CD8-positive, alpha-beta T cell (primary cell): ENCODE measurements at regions of chr3 and their contacts with region 1.

Region 1: GRCh38 chr3:105845488-105845887 is 23.3 kb downstream of the CBLB start:
- DNase-seq: no peak
- ATAC-seq: no peak
- H3K4me3 ChIP-seq: no peak overlapping the region
- H3K4me3 Mint-ChIP-seq: no peak overlapping the region
- H3K27ac ChIP-seq: peak overlapping the region in 1 of 2 experiments; percentile 21
- H3K27ac Mint-ChIP-seq: peak overlapping the region; percentile 62
- H3K4me1 ChIP-seq: peaks cover 47% of the 10 kb centered on the region
- H3K4me1 Mint-ChIP-seq: peaks cover 56% of the 10 kb centered on the region
- H3K27me3 ChIP-seq: no peaks in the 10 kb centered on the region
- H3K27me3 Mint-ChIP-seq: no peaks in the 10 kb centered on the region
- CTCF ChIP-seq: no peak

Region 2: GRCh38 chr3:105473521-105474223 is 371.8 kb before region 1 on chr3:
- CTCF ChIA-PET with region 1: no interaction called
- POLR2A ChIA-PET with region 1: no interaction called
- intact Hi-C with region 1: no loop called
- DNase-seq: no peak
- ATAC-seq: no peak
- H3K4me3 ChIP-seq: no peak overlapping the region
- H3K4me3 Mint-ChIP-seq: no peak overlapping the region
- H3K27ac ChIP-seq: no peak overlapping the region
- H3K27ac Mint-ChIP-seq: no peak overlapping the region
- H3K4me1 ChIP-seq: no peaks in the 10 kb centered on the region
- H3K4me1 Mint-ChIP-seq: no peaks in the 10 kb centered on the region
- H3K27me3 ChIP-seq: no peaks in the 10 kb centered on the region
- H3K27me3 Mint-ChIP-seq: no peaks in the 10 kb centered on the region
- CTCF ChIP-seq: no peak

Region 3: DNA sequence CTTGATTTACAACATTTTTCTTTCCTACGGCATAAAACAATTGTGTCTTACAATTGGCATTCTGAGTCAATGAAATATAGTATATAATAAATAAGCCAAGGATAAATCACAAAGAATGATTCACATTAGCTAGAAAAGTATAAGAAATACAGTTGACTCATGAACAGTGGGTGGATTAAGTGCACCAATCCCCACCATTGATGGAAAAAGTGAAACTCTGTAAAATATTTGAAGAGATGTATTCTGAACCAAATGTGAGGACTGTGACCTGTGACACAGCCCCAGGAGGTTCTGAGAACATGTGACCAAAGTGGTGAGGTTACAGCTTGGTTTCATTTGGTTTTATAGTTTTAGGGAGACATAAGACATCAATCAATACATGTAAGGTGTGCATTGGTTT is 251.3 kb before region 1 on chr3:
- CTCF ChIA-PET with region 1: no interaction called
- POLR2A ChIA-PET with region 1: no interaction called
- intact Hi-C with region 1: no loop called
- DNase-seq: no peak
- ATAC-seq: no peak
- H3K4me3 ChIP-seq: no peak overlapping the region
- H3K4me3 Mint-ChIP-seq: no peak overlapping the region
- H3K27ac ChIP-seq: no peak overlapping the region
- H3K27ac Mint-ChIP-seq: no peak overlapping the region
- H3K4me1 ChIP-seq: no peaks in the 10 kb centered on the region
- H3K4me1 Mint-ChIP-seq: no peaks in the 10 kb centered on the region
- H3K27me3 ChIP-seq: no peaks in the 10 kb centered on the region
- H3K27me3 Mint-ChIP-seq: no peaks in the 10 kb centered on the region
- CTCF ChIP-seq: no peak

Region 4: GRCh38 chr3:105656651-105657504 is 188.6 kb before region 1 on chr3:
- CTCF ChIA-PET with region 1: no interaction called
- POLR2A ChIA-PET with region 1: no interaction called
- intact Hi-C with region 1: no loop called
- DNase-seq: no peak
- ATAC-seq: no peak
- H3K4me3 ChIP-seq: no peak overlapping the region
- H3K4me3 Mint-ChIP-seq: no peak overlapping the region
- H3K27ac ChIP-seq: no peak overlapping the region
- H3K27ac Mint-ChIP-seq: peak overlapping the region; percentile 29
- H3K4me1 ChIP-seq: no peaks in the 10 kb centered on the region
- H3K4me1 Mint-ChIP-seq: peaks cover 4% of the 10 kb centered on the region
- H3K27me3 ChIP-seq: no peaks in the 10 kb centered on the region
- H3K27me3 Mint-ChIP-seq: no peaks in the 10 kb centered on the region
- CTCF ChIP-seq: no peak

Region 5: GRCh38 chr3:105691633-105692032 is 153.9 kb before region 1 on chr3:
- CTCF ChIA-PET with region 1: no interaction called
- POLR2A ChIA-PET with region 1: no interaction called
- intact Hi-C with region 1: loop called in 1 of 2 experiments (anchors 5 kb)
- DNase-seq: no peak
- ATAC-seq: no peak
- H3K4me3 ChIP-seq: no peak overlapping the region
- H3K4me3 Mint-ChIP-seq: no peak overlapping the region
- H3K27ac ChIP-seq: no peak overlapping the region
- H3K27ac Mint-ChIP-seq: peak overlapping the region; percentile 46
- H3K4me1 ChIP-seq: peaks cover 19% of the 10 kb centered on the region
- H3K4me1 Mint-ChIP-seq: peaks cover 45% of the 10 kb centered on the region
- H3K27me3 ChIP-seq: no peaks in the 10 kb centered on the region
- H3K27me3 Mint-ChIP-seq: no peaks in the 10 kb centered on the region
- CTCF ChIP-seq: no peak

Region 6: DNA sequence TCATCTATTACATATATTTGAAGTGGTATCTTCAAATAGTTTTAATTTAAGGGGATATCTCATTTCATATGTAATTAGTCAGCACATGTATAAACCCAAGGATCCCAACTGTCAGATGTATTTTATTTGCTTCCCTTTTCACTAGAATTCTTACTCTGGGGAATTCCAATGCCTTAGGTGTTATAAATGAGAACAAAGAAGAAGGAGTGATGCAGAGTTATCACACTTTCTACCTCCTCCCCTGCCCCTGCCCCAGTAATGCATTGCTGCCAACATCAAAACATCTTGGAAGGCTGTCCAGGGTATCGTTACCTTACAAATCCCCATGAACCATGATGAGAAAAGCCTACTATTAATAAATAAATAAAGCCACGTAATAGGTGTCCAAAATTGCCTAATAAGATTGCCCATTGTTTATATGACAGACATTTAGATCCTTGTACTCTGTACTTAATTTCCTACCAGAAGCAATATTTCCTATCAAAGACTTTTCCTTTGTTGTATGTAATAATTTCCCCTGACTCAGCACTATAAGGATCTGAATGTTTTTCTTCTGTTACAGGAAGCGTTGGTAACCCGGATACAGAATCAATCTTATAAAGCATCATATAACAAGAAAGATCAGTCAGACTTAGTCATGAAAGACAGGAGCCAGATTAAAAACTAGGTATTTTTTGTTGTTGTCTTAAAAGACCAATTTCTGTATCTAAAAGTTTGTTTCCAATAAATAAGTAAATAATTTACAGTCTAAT is 15.4 kb before region 1 on chr3:
- CTCF ChIA-PET with region 1: interaction called, 3 read pairs
- POLR2A ChIA-PET with region 1: no interaction called
- intact Hi-C with region 1: loop called in 1 of 2 experiments (anchors 2 kb)
- DNase-seq: peak in 2 of 9 experiments; percentile 50 to 71
- ATAC-seq: peak; percentile 77
- H3K4me3 ChIP-seq: no peak overlapping the region
- H3K4me3 Mint-ChIP-seq: peak overlapping the region; percentile 6
- H3K27ac ChIP-seq: peak overlapping the region; percentile 35 to 60
- H3K27ac Mint-ChIP-seq: peak overlapping the region; percentile 78
- H3K4me1 ChIP-seq: peaks cover 60% of the 10 kb centered on the region
- H3K4me1 Mint-ChIP-seq: peaks cover 80% of the 10 kb centered on the region
- H3K27me3 ChIP-seq: no peaks in the 10 kb centered on the region
- H3K27me3 Mint-ChIP-seq: no peaks in the 10 kb centered on the region
- CTCF ChIP-seq: no peak

Region 7: GRCh38 chr3:105906836-105907235 is 61.3 kb after region 1 on chr3:
- CTCF ChIA-PET with region 1: no interaction called
- POLR2A ChIA-PET with region 1: no interaction called
- intact Hi-C with region 1: no loop called
- DNase-seq: no peak
- ATAC-seq: no peak
- H3K4me3 ChIP-seq: no peak overlapping the region
- H3K4me3 Mint-ChIP-seq: no peak overlapping the region
- H3K27ac ChIP-seq: no peak overlapping the region
- H3K27ac Mint-ChIP-seq: no peak overlapping the region
- H3K4me1 ChIP-seq: peaks cover 6% of the 10 kb centered on the region
- H3K4me1 Mint-ChIP-seq: peaks cover 11% of the 10 kb centered on the region
- H3K27me3 ChIP-seq: no peaks in the 10 kb centered on the region
- H3K27me3 Mint-ChIP-seq: no peaks in the 10 kb centered on the region
- CTCF ChIP-seq: no peak